ENCODE measurements at regions of chr1 and their contacts with region 1.

Region 1: GRCh38 chr1:182588500-182589452 is at the start of gene RNASEL:
- DNase-seq: peak; percentile 75
- H3K4me3 ChIP-seq: peak within 1 kb of the TSS; percentile 69 to 77 (median 72)
- H3K27ac ChIP-seq: peak within 1 kb of the TSS; percentile 73
- H3K4me1 ChIP-seq: peaks cover 2% of the 10 kb centered on the region
- H3K27me3 ChIP-seq: no peaks in the 10 kb centered on the region
- CTCF ChIP-seq: no peak
- total RNA-seq, gene RNASEL: 3.0 to 3.5 TPM

Region 2: GRCh38 chr1:182643706-182644105 is 54.9 kb after region 1 on chr1:
- CTCF ChIA-PET with region 1: no interaction called
- dilution Hi-C with region 1: loop called (anchors 5 kb)
- in situ Hi-C with region 1: no loop called
- intact Hi-C with region 1: no loop called
- DNase-seq: peak; percentile 89
- H3K4me3 ChIP-seq: no peak overlapping the region
- H3K27ac ChIP-seq: peak overlapping the region; percentile 19
- H3K4me1 ChIP-seq: peaks cover 13% of the 10 kb centered on the region
- H3K27me3 ChIP-seq: no peaks in the 10 kb centered on the region
- CTCF ChIP-seq: no peak

Region 3: DNA sequence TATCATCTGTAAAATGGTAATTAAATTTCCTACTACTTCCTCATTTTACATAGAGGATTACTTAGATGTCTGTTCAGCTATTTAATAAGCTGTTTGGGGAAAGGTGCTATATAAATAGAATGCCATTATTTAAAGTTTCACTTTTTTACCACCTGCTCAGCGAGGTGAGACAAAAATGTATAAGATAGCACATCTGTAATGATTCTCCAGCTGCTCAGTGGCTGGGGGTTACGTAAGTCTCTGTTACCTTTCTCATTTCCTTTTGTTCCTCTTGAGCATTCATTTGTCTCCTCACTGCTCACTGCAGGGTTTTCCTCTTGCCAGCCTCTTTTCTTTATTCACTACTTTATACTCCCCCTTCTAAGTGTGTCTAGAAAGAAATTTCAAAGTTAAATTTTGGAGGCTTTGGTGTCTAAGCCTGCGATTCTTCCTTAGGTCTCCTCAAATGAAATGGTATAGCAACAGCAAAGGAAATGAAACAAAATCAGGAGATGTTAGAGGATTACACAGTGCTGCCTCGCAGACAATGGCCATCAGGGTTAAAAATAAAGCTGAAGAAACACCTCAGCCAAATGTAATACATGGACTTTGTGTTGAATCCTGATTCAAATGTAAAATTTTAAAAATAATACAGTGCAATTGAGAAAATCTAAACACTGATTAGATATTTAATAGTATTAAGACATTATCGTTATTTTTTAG is 88.8 kb after region 1 on chr1:
- CTCF ChIA-PET with region 1: no interaction called
- dilution Hi-C with region 1: no loop called
- in situ Hi-C with region 1: no loop called
- intact Hi-C with region 1: no loop called
- DNase-seq: no peak
- H3K4me3 ChIP-seq: no peak overlapping the region
- H3K27ac ChIP-seq: no peak overlapping the region
- H3K4me1 ChIP-seq: peaks cover 14% of the 10 kb centered on the region
- H3K27me3 ChIP-seq: peaks cover under 1% of the 10 kb centered on the region
- CTCF ChIP-seq: no peak